ENCODE measurements at regions of chr1 and their contacts with region 1.

Region 1: GRCh38 chr1:193654951-193655705 is 468.7 kb upstream of the B3GALT2 start:
- DNase-seq: peak; percentile 81
- ATAC-seq: peak; percentile 99
- H3K4me3 ChIP-seq: no peak overlapping the region
- H3K27ac ChIP-seq: no peak overlapping the region
- H3K4me1 ChIP-seq: peaks cover 6% of the 10 kb centered on the region; the same call in 1 of the 2 replicates
- H3K27me3 ChIP-seq: no peaks in the 10 kb centered on the region
- CTCF ChIP-seq: no peak

Region 2: DNA sequence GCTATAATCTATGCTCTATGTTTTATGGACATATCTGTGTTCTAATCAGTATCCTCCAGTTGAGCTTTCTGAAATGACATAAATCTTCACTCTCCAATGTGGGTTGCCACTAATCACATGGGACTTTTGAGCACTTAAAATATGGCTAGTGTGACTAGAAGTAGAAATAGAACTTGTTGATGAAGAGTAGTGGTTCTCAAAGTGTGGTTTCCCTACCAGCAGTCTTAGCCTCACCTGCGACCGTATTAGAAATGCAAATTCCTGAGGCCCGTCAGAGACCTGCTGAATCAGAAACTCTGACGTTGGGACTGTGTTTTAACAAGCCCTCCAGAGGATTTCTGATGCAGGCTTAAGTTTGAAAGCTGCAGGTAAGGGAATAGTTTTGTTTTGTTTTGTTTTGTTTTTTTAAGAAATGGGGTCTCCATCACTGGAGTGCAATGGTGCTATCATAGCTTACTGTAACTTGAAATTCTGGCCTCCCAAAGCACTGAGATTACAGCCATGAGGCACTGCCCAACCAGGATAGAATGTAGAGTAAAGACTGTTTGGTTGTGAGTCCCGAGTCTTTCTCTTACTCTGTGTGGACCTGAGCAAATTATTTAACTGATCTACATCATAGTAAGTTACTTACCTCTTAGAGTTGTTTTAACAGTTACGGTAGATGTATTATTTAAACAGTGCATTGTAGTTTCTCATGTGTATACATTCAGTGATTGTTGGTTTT is 571.6 kb before region 1 on chr1:
- CTCF ChIA-PET with region 1: no interaction called
- POLR2A ChIA-PET with region 1: no interaction called
- intact Hi-C with region 1: no loop called
- DNase-seq: no peak
- ATAC-seq: no peak
- H3K4me3 ChIP-seq: no peak overlapping the region
- H3K27ac ChIP-seq: no peak overlapping the region
- H3K4me1 ChIP-seq: no peaks in the 10 kb centered on the region
- H3K27me3 ChIP-seq: no peaks in the 10 kb centered on the region
- CTCF ChIP-seq: no peak

Region 3: GRCh38 chr1:193846876-193847604 is 191.9 kb after region 1 on chr1:
- CTCF ChIA-PET with region 1: no interaction called
- POLR2A ChIA-PET with region 1: no interaction called
- intact Hi-C with region 1: no loop called
- DNase-seq: no peak
- ATAC-seq: no peak
- H3K4me3 ChIP-seq: no peak overlapping the region
- H3K27ac ChIP-seq: no peak overlapping the region
- H3K4me1 ChIP-seq: no peaks in the 10 kb centered on the region
- H3K27me3 ChIP-seq: no peaks in the 10 kb centered on the region
- CTCF ChIP-seq: no peak

Region 4: DNA sequence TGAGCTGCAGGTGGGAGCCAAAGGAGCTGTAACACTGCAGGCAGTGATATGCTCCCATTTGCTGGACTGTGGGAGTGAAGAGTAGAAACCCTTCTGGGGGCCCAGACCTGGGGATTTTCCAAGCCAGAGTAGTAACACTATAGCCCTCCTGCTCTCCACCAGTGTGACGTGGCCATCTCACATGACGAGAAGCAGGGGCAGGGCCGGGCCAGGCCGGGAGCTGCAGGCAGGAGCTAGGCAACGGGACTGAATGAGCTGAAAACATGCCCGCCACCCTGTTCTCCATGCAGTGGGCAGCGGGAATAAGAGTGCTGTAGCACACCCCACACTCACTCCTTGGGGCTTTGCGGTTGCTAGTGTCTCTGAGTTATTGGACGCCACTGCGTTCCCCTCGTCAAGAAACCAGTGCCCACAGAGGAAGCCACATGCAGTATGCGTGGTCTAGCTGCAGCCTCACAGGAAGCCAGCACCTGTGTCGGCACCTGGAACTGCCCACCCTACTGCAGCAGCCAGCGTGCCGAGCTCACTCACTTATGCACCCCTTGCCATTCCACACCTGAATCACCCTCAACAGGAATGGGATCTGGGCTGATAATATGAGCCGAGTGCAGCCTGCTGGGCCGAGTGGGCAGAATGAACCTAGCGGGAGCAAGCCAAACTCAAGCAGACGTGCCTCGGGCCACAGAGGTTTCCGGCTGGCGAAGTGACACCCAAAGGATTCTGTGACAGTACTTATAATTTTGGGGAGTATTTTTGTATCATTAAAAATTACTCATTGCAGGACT is 1563.5 kb after region 1 on chr1:
- CTCF ChIA-PET with region 1: no interaction called
- POLR2A ChIA-PET with region 1: no interaction called
- intact Hi-C with region 1: loop called (anchors 10 kb)
- DNase-seq: no peak
- ATAC-seq: no peak
- H3K4me3 ChIP-seq: no peak overlapping the region
- H3K27ac ChIP-seq: no peak overlapping the region
- H3K4me1 ChIP-seq: no peaks in the 10 kb centered on the region
- H3K27me3 ChIP-seq: no peaks in the 10 kb centered on the region
- CTCF ChIP-seq: no peak